Dendritic cell treated with granulocyte-macrophage colony-stimulating factor and Interleukin-4, amounts not matched to agents 40 ng/mL and 50 ng/mL, for 4 days (primary cell): ENCODE measurements at regions of chr16 and their contacts with region 1.

Region 1: GRCh38 chr16:396605-397004 is 394 bp upstream of the NME4 start:
- H3K4me3 Mint-ChIP-seq: peak overlapping the region; percentile 79
- H3K27ac Mint-ChIP-seq: peak overlapping the region; percentile 80
- H3K4me1 Mint-ChIP-seq: peaks cover 46% of the 10 kb centered on the region
- H3K27me3 Mint-ChIP-seq: no peaks in the 10 kb centered on the region

Region 2: DNA sequence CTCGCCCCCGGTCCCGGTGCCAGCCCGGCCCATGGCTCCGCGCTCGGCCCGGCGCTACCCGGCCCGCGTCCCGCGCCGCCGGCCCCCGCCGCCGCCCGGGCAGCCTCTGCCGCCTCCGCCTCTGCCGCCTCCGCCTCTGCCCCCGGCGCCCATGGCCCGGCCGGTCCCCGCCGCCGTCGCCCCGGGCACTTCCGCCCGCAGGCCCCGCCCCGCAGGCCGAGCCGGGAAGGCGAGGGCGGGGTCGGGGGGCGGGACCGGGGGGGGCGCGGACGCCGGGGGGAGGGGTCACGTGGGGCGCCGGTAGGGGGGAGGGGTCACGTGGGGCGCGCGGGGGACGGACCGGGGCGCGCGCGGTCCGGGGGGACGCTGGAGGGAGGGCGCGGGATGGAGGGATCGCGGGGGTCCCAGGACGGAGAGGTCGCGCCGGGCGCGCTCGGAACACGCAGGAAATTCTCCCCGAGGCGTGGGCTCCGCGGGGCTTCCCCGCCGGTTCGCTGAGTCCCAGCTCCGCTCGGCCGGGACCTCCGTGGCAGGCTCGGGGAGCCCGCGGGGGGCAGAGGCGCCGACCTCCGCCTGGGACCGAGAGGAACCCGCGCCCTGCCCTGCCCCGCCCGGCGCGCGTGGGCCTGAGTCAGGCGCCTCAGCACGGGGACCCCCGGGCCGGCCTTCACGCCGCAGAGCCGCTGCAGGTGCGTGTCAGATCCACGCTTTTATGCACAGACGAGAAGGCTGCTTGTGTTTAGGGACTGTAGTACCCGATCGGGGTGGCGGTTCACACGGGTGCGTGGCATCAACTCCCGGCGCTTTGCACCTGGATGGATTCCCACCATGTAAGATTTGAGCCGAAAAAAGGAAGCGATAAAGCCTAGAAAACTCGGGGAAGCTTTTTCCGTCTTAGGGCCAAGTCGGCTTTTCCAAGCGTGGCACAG is 14.6 kb before region 1 on chr16 and contains the start of gene PGAP6:
- intact Hi-C with region 1: loop called (anchors 1 kb)
- H3K4me3 Mint-ChIP-seq: peak within 1 kb of the TSS; percentile 89
- H3K27ac Mint-ChIP-seq: peak within 1 kb of the TSS; percentile 74
- H3K4me1 Mint-ChIP-seq: peaks cover 45% of the 10 kb centered on the region
- H3K27me3 Mint-ChIP-seq: peaks cover 6% of the 10 kb centered on the region